Thyroid gland (tissue), 4 donors: ENCODE measurements at regions of chr4 and their contacts with region 1.

Region 1: GRCh38 chr4:88514557-88515511 is 8.7 kb downstream of the PYURF start:
- DNase-seq: no peak
- H3K4me3 ChIP-seq: no peak overlapping the region
- H3K27ac ChIP-seq: no peak overlapping the region
- H3K4me1 ChIP-seq: no peaks in the 10 kb centered on the region
- H3K27me3 ChIP-seq: no peaks in the 10 kb centered on the region
- CTCF ChIP-seq: no peak
- POLR2A ChIP-seq: no peak

Region 2: DNA sequence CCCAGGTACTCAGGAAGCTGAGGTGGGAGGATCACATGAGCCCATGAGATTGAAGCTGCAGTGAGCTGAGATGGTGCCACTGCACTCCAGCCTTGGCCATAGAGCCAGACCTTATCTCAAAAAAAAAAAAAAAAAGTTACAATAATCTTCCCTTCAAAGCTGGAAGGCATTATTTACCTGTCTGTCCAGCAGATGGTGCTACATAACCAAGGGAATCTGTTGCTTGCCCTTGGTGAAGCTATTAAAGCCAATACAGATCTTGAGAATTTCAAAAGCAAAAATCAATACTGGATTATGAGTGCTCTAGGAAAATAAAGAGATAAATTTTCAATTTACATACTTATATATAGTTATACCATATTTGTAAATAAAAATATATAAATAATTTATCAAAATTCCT is 481.5 kb before region 1 on chr4:
- intact Hi-C with region 1: loop called (anchors 10 kb)
- DNase-seq: peak; percentile 27 to 33
- H3K4me3 ChIP-seq: no peak overlapping the region
- H3K27ac ChIP-seq: no peak overlapping the region
- H3K4me1 ChIP-seq: no peaks in the 10 kb centered on the region
- H3K27me3 ChIP-seq: no peaks in the 10 kb centered on the region
- CTCF ChIP-seq: peak; percentile 30 to 75 (median 53)
- POLR2A ChIP-seq: no peak

Region 3: DNA sequence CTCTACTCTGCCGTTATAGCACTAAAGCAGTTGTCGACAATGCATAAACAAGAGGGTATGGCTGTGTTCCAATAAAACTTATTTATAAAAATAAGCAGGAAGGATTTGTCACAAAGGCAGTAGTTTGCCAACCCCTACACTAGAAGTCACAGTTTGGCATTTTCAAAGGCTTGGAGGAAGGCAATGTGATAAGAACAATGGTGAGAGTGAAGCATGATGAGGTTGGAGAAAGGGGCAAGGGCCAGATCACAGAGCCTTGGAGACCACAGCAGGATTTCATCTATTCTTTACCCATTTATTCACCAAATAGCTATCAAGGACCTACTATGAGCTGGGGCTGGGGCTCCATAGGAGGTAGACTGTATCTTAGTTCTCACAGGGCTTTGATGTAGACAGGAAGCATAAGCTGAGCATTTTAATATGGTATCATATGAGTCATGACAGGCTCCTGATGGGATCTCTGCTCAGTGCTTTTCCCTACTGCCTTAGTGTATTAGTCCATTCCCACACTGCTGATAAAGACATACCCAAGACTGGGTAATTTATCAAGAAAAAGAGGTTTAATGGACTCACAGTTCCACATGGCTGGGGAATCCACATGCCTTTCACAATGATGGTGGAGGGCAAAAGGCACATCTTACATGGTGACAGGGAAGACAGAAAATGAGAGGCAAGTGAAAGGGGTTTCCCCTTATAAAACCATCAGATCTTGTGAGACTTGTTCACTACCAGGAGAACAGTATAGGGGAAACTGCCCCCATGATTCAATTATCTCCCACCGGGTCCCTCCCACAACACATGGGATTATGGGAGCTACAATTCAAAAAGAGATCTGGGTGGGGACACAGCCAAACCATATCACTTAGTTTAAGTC is 289.4 kb before region 1 on chr4:
- intact Hi-C with region 1: loop called (anchors 2 kb)
- DNase-seq: no peak
- H3K4me3 ChIP-seq: no peak overlapping the region
- H3K27ac ChIP-seq: no peak overlapping the region
- H3K4me1 ChIP-seq: no peaks in the 10 kb centered on the region
- H3K27me3 ChIP-seq: no peaks in the 10 kb centered on the region
- CTCF ChIP-seq: no peak
- POLR2A ChIP-seq: no peak

Region 4: GRCh38 chr4:88378691-88379559 is 135.9 kb before region 1 on chr4 and contains the start of gene HERC6:
- intact Hi-C with region 1: loop called (anchors 5 kb)
- DNase-seq: peak; percentile 76 to 82
- H3K4me3 ChIP-seq: peak within 1 kb of the TSS; percentile 80 to 99 (median 98)
- H3K27ac ChIP-seq: peak within 1 kb of the TSS; percentile 88 to 98 (median 89)
- H3K4me1 ChIP-seq: no peaks in the 10 kb centered on the region
- H3K27me3 ChIP-seq: no peaks in the 10 kb centered on the region
- CTCF ChIP-seq: peak; percentile 62 to 85 (median 72)
- POLR2A ChIP-seq: peak in 1 of 2 donors; percentile 28
- total RNA-seq, gene HERC6: 6.7 to 14.0 (median 9.6) TPM

Region 5: DNA sequence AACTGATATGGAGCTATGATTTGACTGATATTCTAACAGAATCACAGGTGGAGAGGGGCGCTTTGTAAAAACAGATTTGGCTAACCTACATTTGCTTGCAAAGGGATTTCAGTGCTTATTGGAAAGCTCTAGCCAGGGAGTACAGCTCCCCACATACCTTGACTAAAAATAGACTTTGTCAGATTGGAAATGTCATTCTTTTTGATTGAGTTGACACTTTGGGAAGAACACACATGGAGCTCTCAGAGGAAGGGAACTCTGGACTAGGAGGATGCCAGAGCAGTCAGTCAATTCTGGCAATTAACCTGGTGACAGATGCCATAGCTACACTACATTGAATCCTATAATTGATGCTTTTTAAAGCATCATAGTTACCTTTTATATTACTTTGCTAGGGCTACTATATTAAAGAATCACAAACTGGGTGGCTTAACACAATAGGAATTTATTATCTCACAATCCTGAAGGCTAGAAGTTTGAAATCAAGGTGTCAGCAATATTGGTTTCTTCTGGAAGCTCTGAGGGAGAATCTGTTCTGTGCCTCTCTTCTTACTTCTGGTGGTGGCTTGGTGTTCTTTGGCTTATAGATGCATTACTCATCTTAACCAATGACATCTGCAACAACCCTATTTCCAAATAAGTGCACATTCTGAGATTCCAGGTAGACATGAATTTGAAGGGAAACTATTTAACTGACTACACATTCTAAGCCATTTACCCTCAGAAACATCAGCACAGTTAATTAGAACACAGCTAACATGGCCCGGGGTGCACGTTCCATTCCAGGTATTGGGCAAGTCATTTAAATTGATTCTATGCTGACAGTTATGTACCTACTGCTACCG is 69.0 kb after region 1 on chr4:
- intact Hi-C with region 1: no loop called
- DNase-seq: no peak
- H3K4me3 ChIP-seq: no peak overlapping the region
- H3K27ac ChIP-seq: no peak overlapping the region
- H3K4me1 ChIP-seq: no peaks in the 10 kb centered on the region
- H3K27me3 ChIP-seq: no peaks in the 10 kb centered on the region
- CTCF ChIP-seq: no peak
- POLR2A ChIP-seq: no peak